Activated CD8-positive, alpha-beta T cell treated with anti-CD3 and anti-CD28 coated beads for 36 hours (primary cell): ENCODE measurements at regions of chr4 and their contacts with region 1.

Region 1: DNA sequence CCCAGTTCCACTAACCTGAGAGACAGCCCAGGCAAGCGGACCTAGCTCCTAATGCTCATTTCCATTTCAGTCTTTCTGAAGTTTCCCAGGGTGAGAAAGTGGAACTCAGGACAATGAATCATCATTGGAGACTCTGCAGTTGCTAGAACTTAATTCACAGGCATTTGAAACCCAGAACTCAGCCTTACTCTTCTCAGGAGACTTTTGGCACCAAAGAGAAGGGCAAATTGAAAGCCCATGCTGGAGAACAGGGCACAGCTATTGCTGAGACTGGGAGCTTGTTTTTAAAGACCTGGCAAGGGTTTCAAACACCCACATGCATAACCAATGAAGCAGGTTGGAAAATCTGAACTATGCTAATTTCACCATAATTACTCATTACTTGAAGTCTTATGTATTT is 36.0 kb downstream of the BST1 start:
- DNase-seq: peak; percentile 17
- ATAC-seq: peak; percentile 79
- H3K4me3 Mint-ChIP-seq: no peak overlapping the region
- H3K27ac Mint-ChIP-seq: peak overlapping the region; percentile 17
- H3K4me1 Mint-ChIP-seq: peaks cover 34% of the 10 kb centered on the region
- H3K27me3 Mint-ChIP-seq: no peaks in the 10 kb centered on the region
- CTCF ChIP-seq: no peak

Region 2: GRCh38 chr4:15547392-15547791 is 191.5 kb before region 1 on chr4:
- CTCF ChIA-PET with region 1: no interaction called
- POLR2A ChIA-PET with region 1: no interaction called
- intact Hi-C with region 1: no loop called
- DNase-seq: peak; percentile 25
- ATAC-seq: peak; percentile 70
- H3K4me3 Mint-ChIP-seq: peak overlapping the region; percentile 13
- H3K27ac Mint-ChIP-seq: no peak overlapping the region
- H3K4me1 Mint-ChIP-seq: peaks cover 6% of the 10 kb centered on the region
- H3K27me3 Mint-ChIP-seq: no peaks in the 10 kb centered on the region
- CTCF ChIP-seq: no peak

Region 3: GRCh38 chr4:15749001-15749400 is 10.1 kb after region 1 on chr4:
- CTCF ChIA-PET with region 1: interaction called, 10 read pairs
- POLR2A ChIA-PET with region 1: interaction called, 11 read pairs
- intact Hi-C with region 1: loop called (anchors 2 kb)
- DNase-seq: no peak
- ATAC-seq: no peak
- H3K4me3 Mint-ChIP-seq: no peak overlapping the region
- H3K27ac Mint-ChIP-seq: no peak overlapping the region
- H3K4me1 Mint-ChIP-seq: peaks cover 19% of the 10 kb centered on the region
- H3K27me3 Mint-ChIP-seq: no peaks in the 10 kb centered on the region
- CTCF ChIP-seq: no peak

Region 4: DNA sequence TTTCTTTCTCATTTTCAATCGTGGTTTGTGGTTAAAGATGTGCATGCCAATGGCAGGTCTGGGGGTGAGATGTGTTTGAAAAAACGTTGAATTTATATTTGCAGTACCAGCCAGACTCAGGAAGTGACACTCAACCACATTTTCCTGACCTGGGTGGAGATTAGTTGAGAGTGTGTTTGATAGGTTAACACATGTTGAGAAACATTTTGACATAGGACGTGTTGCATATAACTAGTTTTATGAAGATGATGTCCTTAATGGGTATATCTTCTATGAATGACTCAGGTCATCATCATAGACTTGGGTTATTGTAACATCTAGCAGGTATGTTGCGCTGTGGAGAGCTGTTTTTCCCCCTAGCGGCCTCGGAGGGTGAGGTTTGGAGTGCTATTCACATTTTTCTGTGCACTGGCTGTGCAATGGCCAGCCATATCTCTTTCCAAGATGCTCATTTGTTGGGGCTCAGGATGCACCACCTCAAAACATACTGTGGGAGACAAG is 17.5 kb after region 1 on chr4:
- CTCF ChIA-PET with region 1: interaction called, 36 read pairs
- POLR2A ChIA-PET with region 1: interaction called, 5 read pairs
- intact Hi-C with region 1: loop called (anchors 2 kb)
- DNase-seq: peak; percentile 90
- ATAC-seq: peak; percentile 84
- H3K4me3 Mint-ChIP-seq: peak overlapping the region; percentile 66
- H3K27ac Mint-ChIP-seq: peak overlapping the region; percentile 92
- H3K4me1 Mint-ChIP-seq: peaks cover 47% of the 10 kb centered on the region
- H3K27me3 Mint-ChIP-seq: no peaks in the 10 kb centered on the region
- CTCF ChIP-seq: peak; percentile 73